ENCODE measurements at regions of chrX and their contacts with region 1.

Region 1: GRCh38 chrX:74242050-74242449 is 61.9 kb upstream of the ZCCHC13 start:
- DNase-seq: no peak
- H3K4me3 ChIP-seq: no peak overlapping the region
- H3K27ac ChIP-seq: peak overlapping the region; percentile 37 to 66
- H3K4me1 ChIP-seq: peaks cover 0 to 7% of the 10 kb centered on the region in 2 donors
- H3K27me3 ChIP-seq: no peaks in the 10 kb centered on the region
- CTCF ChIP-seq: no peak

Region 2: DNA sequence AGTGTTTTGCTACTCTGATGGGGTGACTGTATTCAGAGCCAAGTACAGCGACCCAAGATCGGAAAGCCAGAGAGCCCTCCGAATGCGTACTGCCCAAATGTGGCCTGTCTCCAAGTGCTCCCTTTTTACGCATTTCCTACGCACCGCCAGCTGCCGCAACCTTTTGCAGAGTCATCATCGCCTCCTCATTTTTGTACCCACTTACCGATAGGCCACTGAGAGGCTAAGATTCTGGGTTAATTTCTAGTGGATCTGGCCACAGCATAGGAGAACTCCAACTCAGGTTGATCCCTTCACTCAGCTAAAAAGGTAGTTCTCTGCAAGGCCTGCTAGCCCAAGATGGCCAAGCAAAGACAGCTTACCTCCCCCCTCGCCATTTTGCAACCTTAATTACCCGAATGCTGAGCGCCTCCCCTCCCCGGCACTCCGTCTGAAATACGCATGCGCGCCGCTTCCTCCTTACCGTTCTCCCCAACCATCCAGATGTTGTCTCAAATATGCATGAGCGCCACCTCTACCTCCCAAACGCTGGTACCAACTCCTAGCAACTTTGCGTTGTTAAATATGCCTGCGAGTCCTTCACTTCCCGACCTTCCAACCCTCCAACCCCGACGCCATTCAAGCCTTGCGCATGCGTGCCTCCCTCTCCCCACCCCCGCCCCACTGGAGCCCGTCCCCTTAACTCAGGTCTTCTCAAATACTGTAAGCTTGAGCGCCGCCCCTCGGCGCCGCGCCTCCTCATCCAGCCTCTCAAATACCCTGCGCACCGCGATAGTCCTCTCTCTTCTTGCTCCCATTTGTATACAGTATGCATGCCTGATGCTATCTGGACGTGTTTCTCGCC is 50.1 kb after region 1 on chrX:
- intact Hi-C with region 1: loop called (anchors 5 kb)
- DNase-seq: peak; percentile 73 to 94
- H3K4me3 ChIP-seq: peak overlapping the region; percentile 57 to 71
- H3K27ac ChIP-seq: peak overlapping the region; percentile 73 to 87
- H3K4me1 ChIP-seq: no peaks in the 10 kb centered on the region
- H3K27me3 ChIP-seq: no peaks in the 10 kb centered on the region
- CTCF ChIP-seq: peak in 1 of 3 experiments; percentile 17